ENCODE measurements at regions of chr19 and their contacts with region 1.

Region 1: DNA sequence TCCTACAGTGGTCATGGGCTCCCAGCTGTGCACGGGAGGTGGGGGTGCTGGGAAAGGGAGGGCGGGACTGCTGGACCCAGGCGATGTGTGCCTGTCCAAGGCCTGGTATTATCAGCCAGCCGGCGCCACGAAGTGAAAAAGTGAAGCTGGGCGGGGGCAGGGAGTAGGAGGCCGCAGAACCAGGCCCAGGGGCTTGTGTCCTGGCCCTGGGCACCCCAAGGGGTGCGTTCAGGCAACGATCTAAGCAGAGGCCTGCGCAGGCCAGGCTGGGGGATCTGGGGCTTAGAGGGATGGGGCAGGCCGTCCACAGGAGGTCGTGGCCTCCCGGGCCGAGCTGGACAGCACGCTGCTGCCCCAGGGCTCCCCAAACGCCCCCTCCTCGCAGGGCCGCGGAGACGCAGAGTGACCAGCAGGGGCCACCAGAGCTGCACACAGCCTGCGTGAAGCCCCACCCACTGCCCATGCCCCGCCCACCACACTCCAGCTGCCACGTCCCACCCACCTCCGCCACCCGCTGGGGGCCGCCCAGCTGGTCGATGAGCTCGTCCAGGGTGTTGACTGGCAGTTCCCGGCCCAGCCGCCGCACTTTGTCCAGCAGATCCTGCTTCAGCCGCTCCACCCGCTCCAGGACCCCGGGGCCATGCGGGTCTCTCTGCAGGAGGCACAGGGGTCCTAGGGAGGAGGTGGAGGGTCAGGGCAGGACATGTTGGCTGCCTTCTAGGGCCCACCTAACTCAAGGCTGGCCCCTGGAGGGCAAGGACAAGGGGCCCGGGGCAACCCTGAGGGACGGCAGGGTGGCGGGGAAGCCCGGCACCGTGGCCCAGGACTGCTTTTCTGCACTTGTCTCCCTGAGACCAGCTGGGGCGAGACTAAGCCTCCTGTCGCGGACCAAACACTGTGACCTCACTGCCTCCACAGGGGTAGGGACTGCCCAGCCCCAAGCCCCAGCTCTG is 9.5 kb downstream of the GPX4 start:
- DNase-seq: peak; percentile 97
- ATAC-seq: peak; percentile 89 to 93

Region 2: GRCh38 chr19:262125-262524 is 851.2 kb before region 1 on chr19:
- intact Hi-C with region 1: no loop called
- DNase-seq: no peak
- ATAC-seq: no peak

Region 3: GRCh38 chr19:1183534-1184172 is 70.3 kb after region 1 on chr19:
- intact Hi-C with region 1: loop called in 1 of 2 experiments (anchors 5 kb)
- DNase-seq: no peak
- ATAC-seq: no peak

Region 4: GRCh38 chr19:1189419-1189818 is 76.1 kb after region 1 on chr19:
- intact Hi-C with region 1: loop called (anchors 5 kb)
- DNase-seq: no peak
- ATAC-seq: peak in 1 of 2 donors; percentile 73

Measured in left cardiac atrium (tissue), 4 donors.